ENCODE measurements at regions of chr3 and their contacts with region 1.

Region 1: GRCh38 chr3:8301728-8302462 is 199.7 kb upstream of the LMCD1 start:
- DNase-seq: peak in 2 of 9 experiments; percentile 55 to 61
- ATAC-seq: peak; percentile 34
- H3K4me3 ChIP-seq: no peak overlapping the region
- H3K4me3 Mint-ChIP-seq: no peak overlapping the region
- H3K27ac ChIP-seq: no peak overlapping the region
- H3K27ac Mint-ChIP-seq: no peak overlapping the region
- H3K4me1 ChIP-seq: no peaks in the 10 kb centered on the region
- H3K4me1 Mint-ChIP-seq: peaks cover 6% of the 10 kb centered on the region
- H3K27me3 ChIP-seq: no peaks in the 10 kb centered on the region
- H3K27me3 Mint-ChIP-seq: no peaks in the 10 kb centered on the region
- CTCF ChIP-seq: peak; percentile 66

Region 2: DNA sequence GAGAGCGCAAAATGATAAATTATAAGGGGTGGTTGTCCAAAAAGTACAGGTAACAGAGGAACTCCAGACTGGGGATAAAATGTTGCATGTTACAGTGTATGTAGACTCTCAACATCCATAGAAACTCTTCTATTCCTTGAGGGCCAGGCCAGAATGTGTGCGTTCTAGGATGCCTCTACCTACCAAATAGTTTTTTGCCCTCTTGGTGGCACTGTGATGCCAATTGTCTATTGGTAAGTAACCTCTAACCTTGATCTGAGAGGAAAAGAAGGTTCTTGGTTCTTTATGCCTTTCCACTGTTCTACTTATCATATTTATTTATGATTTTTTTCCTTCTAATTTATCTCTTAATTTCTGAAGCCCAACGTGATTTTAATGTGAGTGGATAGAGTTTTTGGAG is 1016.4 kb before region 1 on chr3:
- CTCF ChIA-PET with region 1: no interaction called
- POLR2A ChIA-PET with region 1: no interaction called
- intact Hi-C with region 1: no loop called
- DNase-seq: peak in 2 of 9 experiments; percentile 3 to 5
- ATAC-seq: no peak
- H3K4me3 ChIP-seq: no peak overlapping the region
- H3K4me3 Mint-ChIP-seq: no peak overlapping the region
- H3K27ac ChIP-seq: no peak overlapping the region
- H3K27ac Mint-ChIP-seq: no peak overlapping the region
- H3K4me1 ChIP-seq: no peaks in the 10 kb centered on the region
- H3K4me1 Mint-ChIP-seq: no peaks in the 10 kb centered on the region
- H3K27me3 ChIP-seq: no peaks in the 10 kb centered on the region
- H3K27me3 Mint-ChIP-seq: no peaks in the 10 kb centered on the region
- CTCF ChIP-seq: no peak

Region 3: DNA sequence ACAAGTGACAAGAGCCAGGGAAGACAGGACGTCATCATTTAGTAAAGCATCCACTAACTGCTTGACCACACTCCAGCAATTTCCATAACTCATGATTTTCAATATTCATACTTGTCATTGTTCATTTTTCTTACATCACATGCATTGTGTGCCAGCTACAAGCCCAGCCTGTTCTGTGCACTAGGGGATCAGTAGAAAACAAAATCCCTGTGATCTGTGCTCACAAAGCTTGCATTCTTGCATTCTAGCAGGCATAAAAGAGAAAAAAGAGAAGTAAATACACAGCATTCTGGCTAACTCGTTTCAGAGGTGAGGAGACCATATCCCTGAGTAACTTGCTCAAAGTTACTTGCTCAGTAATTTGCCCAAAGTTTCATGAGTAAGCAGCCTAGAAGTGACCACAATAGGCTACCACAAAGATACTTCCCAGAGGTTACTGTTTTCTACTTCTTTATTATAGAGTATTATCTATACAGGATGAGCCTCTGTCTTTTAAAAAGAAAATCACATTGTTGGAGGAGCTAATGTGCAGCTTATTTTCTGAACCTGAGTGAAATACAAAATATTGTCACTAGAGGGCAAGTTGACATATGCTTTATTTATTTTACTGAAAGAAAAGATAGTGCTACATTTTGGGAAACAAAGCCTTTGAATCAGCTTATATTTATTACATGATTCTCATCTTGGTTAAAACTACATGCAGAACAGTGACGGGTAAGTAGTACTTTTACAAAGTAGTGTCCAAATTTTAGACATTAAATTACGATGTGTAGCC is 501.7 kb before region 1 on chr3:
- CTCF ChIA-PET with region 1: no interaction called
- POLR2A ChIA-PET with region 1: no interaction called
- intact Hi-C with region 1: loop called in 1 of 2 experiments (anchors 5 kb)
- DNase-seq: peak in 2 of 9 experiments; percentile 7 to 14
- ATAC-seq: no peak
- H3K4me3 ChIP-seq: no peak overlapping the region
- H3K4me3 Mint-ChIP-seq: no peak overlapping the region
- H3K27ac ChIP-seq: no peak overlapping the region
- H3K27ac Mint-ChIP-seq: no peak overlapping the region
- H3K4me1 ChIP-seq: no peaks in the 10 kb centered on the region
- H3K4me1 Mint-ChIP-seq: no peaks in the 10 kb centered on the region
- H3K27me3 ChIP-seq: no peaks in the 10 kb centered on the region
- H3K27me3 Mint-ChIP-seq: no peaks in the 10 kb centered on the region
- CTCF ChIP-seq: peak; percentile 23

Region 4: DNA sequence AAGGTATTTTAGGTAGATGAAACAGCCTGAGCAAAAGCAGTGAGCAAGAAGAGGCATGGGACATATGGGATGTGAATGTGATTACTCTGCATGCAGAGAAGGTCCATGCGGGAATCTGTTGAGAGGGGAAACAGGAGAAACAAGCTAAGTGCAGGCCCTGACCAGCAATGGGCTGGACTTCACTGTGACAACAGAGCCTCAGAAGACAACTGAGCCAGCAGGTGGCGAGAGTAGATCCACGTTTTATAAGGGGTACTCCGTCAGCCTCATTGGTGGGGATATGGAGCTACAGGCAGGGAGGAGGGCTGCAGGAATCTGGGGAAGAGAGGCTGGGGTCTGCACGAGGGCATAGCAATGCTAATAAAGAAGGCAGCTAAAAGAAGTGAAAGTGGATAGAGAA is 206.2 kb before region 1 on chr3:
- CTCF ChIA-PET with region 1: no interaction called
- POLR2A ChIA-PET with region 1: no interaction called
- intact Hi-C with region 1: no loop called
- DNase-seq: no peak
- ATAC-seq: no peak
- H3K4me3 ChIP-seq: no peak overlapping the region
- H3K4me3 Mint-ChIP-seq: no peak overlapping the region
- H3K27ac ChIP-seq: no peak overlapping the region
- H3K27ac Mint-ChIP-seq: no peak overlapping the region
- H3K4me1 ChIP-seq: no peaks in the 10 kb centered on the region
- H3K4me1 Mint-ChIP-seq: no peaks in the 10 kb centered on the region
- H3K27me3 ChIP-seq: no peaks in the 10 kb centered on the region
- H3K27me3 Mint-ChIP-seq: no peaks in the 10 kb centered on the region
- CTCF ChIP-seq: no peak

Region 5: GRCh38 chr3:8290611-8291010 is 11.3 kb before region 1 on chr3:
- CTCF ChIA-PET with region 1: interaction called, 20 read pairs
- POLR2A ChIA-PET with region 1: no interaction called
- intact Hi-C with region 1: no loop called
- DNase-seq: no peak
- ATAC-seq: no peak
- H3K4me3 ChIP-seq: no peak overlapping the region
- H3K4me3 Mint-ChIP-seq: no peak overlapping the region
- H3K27ac ChIP-seq: no peak overlapping the region
- H3K27ac Mint-ChIP-seq: no peak overlapping the region
- H3K4me1 ChIP-seq: no peaks in the 10 kb centered on the region
- H3K4me1 Mint-ChIP-seq: no peaks in the 10 kb centered on the region
- H3K27me3 ChIP-seq: no peaks in the 10 kb centered on the region
- H3K27me3 Mint-ChIP-seq: no peaks in the 10 kb centered on the region
- CTCF ChIP-seq: no peak

Region 6: GRCh38 chr3:8899986-8900385 is 598.1 kb after region 1 on chr3:
- CTCF ChIA-PET with region 1: no interaction called
- POLR2A ChIA-PET with region 1: no interaction called
- intact Hi-C with region 1: no loop called
- DNase-seq: no peak
- ATAC-seq: no peak
- H3K4me3 ChIP-seq: no peak overlapping the region
- H3K4me3 Mint-ChIP-seq: no peak overlapping the region
- H3K27ac ChIP-seq: no peak overlapping the region
- H3K27ac Mint-ChIP-seq: no peak overlapping the region
- H3K4me1 ChIP-seq: no peaks in the 10 kb centered on the region
- H3K4me1 Mint-ChIP-seq: no peaks in the 10 kb centered on the region
- H3K27me3 ChIP-seq: no peaks in the 10 kb centered on the region
- H3K27me3 Mint-ChIP-seq: no peaks in the 10 kb centered on the region
- CTCF ChIP-seq: no peak

Measured in CD8-positive, alpha-beta T cell (primary cell).